CD4-positive, alpha-beta memory T cell (primary cell): ENCODE measurements at regions of chr9 and their contacts with region 1.

Region 1: DNA sequence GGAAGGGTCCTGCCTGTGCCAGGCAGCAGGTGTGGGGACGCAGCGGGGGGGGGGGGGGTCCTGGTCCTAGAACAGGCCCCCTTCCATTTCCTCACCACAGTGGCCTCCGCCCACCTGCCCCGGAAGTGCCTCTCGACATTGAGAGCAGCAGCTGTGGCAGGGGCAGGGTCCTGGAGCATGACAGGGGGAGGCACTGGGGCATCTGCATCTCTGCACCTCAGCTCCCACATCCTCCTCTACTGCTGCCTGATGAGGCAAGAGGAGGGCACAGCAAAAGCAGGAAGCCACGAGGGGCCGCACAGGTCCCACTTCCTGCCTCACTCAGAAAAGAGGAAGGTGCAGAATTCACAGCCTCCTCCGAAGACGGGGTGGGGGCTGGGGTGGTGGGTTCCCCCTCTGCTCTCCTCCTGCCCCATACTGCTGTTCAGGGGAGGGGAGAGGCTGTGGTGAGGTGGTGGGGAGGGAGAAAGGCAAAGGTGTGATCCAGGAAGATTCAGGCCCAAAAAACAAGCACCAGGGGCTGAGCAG is 14.8 kb downstream of the AKNA start:
- DNase-seq: peak; percentile 88 to 96 (median 91)
- H3K4me3 ChIP-seq: peak overlapping the region in 1 of 2 donors; percentile 57
- H3K4me3 Mint-ChIP-seq: peak overlapping the region; percentile 84 to 96 (median 88)
- H3K27ac ChIP-seq: peak overlapping the region; percentile 79
- H3K27ac Mint-ChIP-seq: peak overlapping the region; percentile 78 to 99 (median 96)
- H3K4me1 ChIP-seq: peaks cover 96% of the 10 kb centered on the region
- H3K4me1 Mint-ChIP-seq: peaks cover 58 to 97% (median 85%) of the 10 kb centered on the region in 4 donors
- H3K27me3 ChIP-seq: no peaks in the 10 kb centered on the region
- H3K27me3 Mint-ChIP-seq: no peaks in the 10 kb centered on the region

Region 2: DNA sequence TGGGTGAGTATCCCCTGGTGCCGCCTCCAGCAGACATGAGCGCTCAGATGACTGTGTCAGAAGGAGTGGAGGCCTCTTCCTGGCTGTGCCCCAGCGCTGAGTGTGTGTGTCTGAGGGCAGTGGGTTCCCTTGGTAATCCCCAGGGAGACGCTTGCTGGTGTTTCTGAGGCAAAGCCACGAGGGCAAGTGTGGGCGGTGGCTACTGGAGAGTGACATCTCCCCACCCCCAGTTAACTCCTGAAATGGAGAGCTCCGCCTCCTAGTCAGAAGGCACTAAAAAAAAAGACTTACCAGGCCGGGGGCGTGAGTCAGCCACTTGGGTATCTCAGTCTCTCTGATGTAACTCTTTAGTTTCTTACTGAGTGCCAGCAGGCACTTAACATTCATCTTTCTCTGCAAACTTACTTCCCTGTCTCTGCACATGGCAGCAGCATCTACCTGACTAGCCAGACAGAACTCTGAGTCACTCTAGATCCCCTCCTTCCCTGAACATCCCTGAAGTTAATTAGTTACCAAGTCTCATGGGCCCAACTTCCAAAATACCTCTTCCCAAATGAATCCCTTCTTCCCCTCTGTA is 24.0 kb before region 1 on chr9:
- CTCF ChIA-PET with region 1: interaction called, 4 read pairs
- POLR2A ChIA-PET with region 1: interaction called, 80 read pairs
- intact Hi-C with region 1: no loop called
- DNase-seq: peak in 3 of 5 donors; percentile 36 to 82 (median 37)
- H3K4me3 ChIP-seq: no peak overlapping the region
- H3K4me3 Mint-ChIP-seq: peak overlapping the region in 6 of 8 donors; percentile 17 to 47 (median 31)
- H3K27ac ChIP-seq: peak overlapping the region; percentile 30
- H3K27ac Mint-ChIP-seq: peak overlapping the region; percentile 84 to 95 (median 92)
- H3K4me1 ChIP-seq: peaks cover 42% of the 10 kb centered on the region
- H3K4me1 Mint-ChIP-seq: peaks cover 28 to 51% (median 35%) of the 10 kb centered on the region in 4 donors
- H3K27me3 ChIP-seq: no peaks in the 10 kb centered on the region
- H3K27me3 Mint-ChIP-seq: no peaks in the 10 kb centered on the region

Region 3: GRCh38 chr9:114356792-114357191 is 16.2 kb before region 1 on chr9:
- CTCF ChIA-PET with region 1: interaction called, 4 read pairs
- POLR2A ChIA-PET with region 1: interaction called, 80 read pairs
- intact Hi-C with region 1: no loop called
- DNase-seq: no peak
- H3K4me3 ChIP-seq: no peak overlapping the region
- H3K4me3 Mint-ChIP-seq: no peak overlapping the region
- H3K27ac ChIP-seq: no peak overlapping the region
- H3K27ac Mint-ChIP-seq: peak overlapping the region in 6 of 7 donors; percentile 48 to 74 (median 68)
- H3K4me1 ChIP-seq: peaks cover 50% of the 10 kb centered on the region
- H3K4me1 Mint-ChIP-seq: peaks cover 30 to 50% (median 40%) of the 10 kb centered on the region in 4 donors
- H3K27me3 ChIP-seq: no peaks in the 10 kb centered on the region
- H3K27me3 Mint-ChIP-seq: no peaks in the 10 kb centered on the region

Region 4: GRCh38 chr9:114397848-114398605 is 25.0 kb after region 1 on chr9:
- CTCF ChIA-PET with region 1: interaction called, 11 read pairs
- POLR2A ChIA-PET with region 1: interaction called, 1,614 read pairs
- intact Hi-C with region 1: loop called (anchors 1 kb)
- DNase-seq: peak; percentile 92 to 96 (median 95)
- H3K4me3 ChIP-seq: peak overlapping the region; percentile 78 to 92
- H3K4me3 Mint-ChIP-seq: peak overlapping the region; percentile 92 to 99 (median 97)
- H3K27ac ChIP-seq: peak overlapping the region; percentile 92
- H3K27ac Mint-ChIP-seq: peak overlapping the region; percentile 93 to 99 (median 97)
- H3K4me1 ChIP-seq: peaks cover 45% of the 10 kb centered on the region
- H3K4me1 Mint-ChIP-seq: peaks cover 28 to 57% (median 43%) of the 10 kb centered on the region in 4 donors
- H3K27me3 ChIP-seq: no peaks in the 10 kb centered on the region
- H3K27me3 Mint-ChIP-seq: no peaks in the 10 kb centered on the region